ENCODE measurements at regions of chr21 and their contacts with region 1.

Region 1: GRCh38 chr21:36504067-36505058 is 24.4 kb upstream of the CLDN14 start:
- DNase-seq: no peak
- CTCF ChIP-seq: peak; percentile 70

Region 2: DNA sequence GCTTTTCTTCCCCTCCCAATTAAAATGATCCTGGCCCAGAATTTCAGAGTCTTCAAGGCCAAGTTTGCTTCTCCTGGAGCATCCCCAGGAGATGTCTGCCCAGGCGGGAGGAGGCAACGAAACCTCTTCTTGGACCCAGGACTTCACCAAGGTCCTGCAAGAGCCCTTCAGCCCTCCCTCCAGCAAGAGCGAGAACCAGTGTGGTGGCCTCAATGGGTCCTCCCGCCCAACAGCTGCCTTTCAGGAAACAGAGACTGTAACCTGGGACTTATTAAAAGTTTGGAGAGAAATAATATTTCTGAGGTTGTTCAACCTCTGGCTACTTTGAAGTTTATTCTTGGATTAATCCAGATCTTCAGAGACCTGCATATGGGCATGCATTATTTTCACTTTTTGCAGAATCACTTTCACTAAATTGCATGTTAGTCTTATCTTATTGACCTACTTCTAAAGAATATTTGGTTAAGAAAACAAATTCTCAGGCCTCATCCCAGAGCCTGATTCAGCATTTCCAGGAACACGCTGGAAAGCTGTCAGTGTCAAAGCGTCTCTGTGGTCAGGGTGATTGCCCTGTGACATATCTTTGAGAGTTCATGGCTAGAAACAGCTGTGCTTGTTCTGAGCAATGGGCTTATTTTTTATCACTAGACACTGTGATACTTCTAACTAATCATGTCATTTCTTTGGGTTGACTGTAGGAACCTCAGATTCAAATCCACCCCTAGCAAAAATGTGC is 41.6 kb after region 1 on chr21:
- in situ Hi-C with region 1: loop called (anchors 5 kb)
- DNase-seq: no peak
- CTCF ChIP-seq: no peak

Measured in GM13976 (cell line).